Psoas muscle (tissue), 8 donors: ENCODE measurements at regions of chr1 and their contacts with region 1.

Region 1: DNA sequence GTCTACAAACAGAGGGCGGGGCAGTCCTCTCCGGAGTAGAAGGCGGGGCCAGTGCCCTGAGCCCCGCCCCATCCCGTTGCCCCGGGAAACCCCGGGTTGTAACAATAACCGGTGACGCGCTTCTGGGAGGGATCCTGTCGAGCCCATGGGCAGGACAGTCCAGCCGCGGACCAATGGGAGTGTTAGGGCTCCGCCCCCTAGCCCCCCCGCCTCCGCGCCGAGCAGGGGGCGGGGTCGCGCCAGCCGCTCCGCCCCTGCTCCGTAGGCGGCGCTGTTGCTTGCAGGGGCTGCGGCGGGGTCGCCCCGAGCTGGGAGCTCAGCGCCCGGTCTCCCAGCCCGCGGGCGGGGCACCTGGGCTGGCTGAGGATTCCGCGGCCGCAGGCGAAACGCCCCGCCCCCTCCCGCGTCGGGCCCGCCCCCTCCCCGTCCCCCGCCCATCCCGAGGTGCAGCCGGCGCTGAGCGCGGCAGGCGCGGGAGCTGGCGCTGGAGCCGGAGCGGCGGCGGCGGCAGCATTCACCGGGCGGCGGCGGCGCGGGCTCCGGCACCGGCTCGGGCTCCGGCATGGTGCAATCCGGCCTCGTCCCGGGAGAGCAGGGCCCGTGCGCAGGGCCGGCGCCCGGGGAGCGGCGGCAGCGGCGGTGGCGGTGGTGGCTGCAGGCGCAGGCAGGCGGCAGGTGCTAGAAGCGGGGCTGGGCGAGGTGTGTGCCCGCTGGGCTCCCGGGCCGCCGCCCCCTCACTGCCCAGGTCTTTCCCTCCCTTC is at the start of gene FOXO6:
- DNase-seq: peak; percentile 99
- ATAC-seq: peak; percentile 85 to 92 (median 89)
- H3K4me3 ChIP-seq: peak within 1 kb of the TSS; percentile 87
- H3K27ac ChIP-seq: peak within 1 kb of the TSS; percentile 58
- H3K4me1 ChIP-seq: peaks cover 49% of the 10 kb centered on the region
- H3K27me3 ChIP-seq: no peaks in the 10 kb centered on the region
- CTCF ChIP-seq: peak; percentile 66
- total RNA-seq, gene FOXO6: 0.84 to 8.6 (median 3.3) TPM

Region 2: DNA sequence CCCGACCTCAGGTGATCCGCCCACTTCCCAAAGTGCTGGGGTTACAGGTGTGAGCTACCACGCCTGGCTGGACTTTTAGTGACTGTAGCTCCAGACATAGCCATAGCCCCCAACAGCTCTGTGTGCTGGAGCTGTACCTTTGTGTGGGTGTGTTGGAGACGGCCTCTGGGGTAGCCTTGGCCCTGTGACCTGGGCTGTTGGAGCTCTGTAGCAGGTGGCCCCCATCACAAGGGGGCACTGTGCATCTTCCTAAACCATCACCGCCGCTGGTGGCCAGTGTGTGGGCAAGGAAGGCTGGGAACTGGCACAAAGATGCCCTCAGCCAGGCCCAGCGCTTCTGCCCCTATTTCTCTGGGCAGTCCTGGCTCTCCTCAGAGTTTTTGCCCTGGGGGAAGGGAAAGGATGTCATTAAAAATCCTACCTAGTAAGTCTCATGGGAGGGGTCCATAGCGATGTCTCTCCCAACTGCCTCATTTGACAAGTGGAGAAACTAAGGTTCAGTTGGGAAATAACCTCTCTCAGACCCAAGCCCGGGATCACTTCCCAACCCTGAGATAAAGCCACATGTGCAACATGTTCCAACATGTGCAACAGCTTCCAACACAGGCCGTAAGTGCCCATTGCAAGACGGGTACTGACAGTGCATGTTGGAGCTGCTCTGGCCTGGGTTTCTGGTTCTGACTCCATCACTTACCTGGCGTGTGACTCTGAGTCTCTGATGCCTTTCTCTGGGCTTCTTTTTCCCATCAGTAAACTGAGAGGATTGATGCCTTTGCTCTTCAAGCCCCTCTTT is 38.1 kb before region 1 on chr1:
- intact Hi-C with region 1: no loop called
- DNase-seq: peak; percentile 60 to 83
- ATAC-seq: peak; percentile 86 to 94 (median 90)
- H3K4me3 ChIP-seq: no peak overlapping the region
- H3K27ac ChIP-seq: no peak overlapping the region
- H3K4me1 ChIP-seq: peaks cover 24% of the 10 kb centered on the region
- H3K27me3 ChIP-seq: no peaks in the 10 kb centered on the region
- CTCF ChIP-seq: peak; percentile 63

Region 3: GRCh38 chr1:41394959-41395956 is 34.1 kb after region 1 on chr1:
- intact Hi-C with region 1: loop called in 1 of 2 experiments (anchors 5 kb)
- DNase-seq: no peak
- ATAC-seq: no peak
- H3K4me3 ChIP-seq: no peak overlapping the region
- H3K27ac ChIP-seq: peak overlapping the region; percentile 71
- H3K4me1 ChIP-seq: peaks cover 40% of the 10 kb centered on the region
- H3K27me3 ChIP-seq: peaks cover 0 to 3% (median 0%) of the 10 kb centered on the region in 3 donors
- CTCF ChIP-seq: no peak

Region 4: GRCh38 chr1:41423511-41424221 is 62.5 kb after region 1 on chr1:
- intact Hi-C with region 1: loop called (anchors 2 kb)
- DNase-seq: peak; percentile 75 to 93
- ATAC-seq: peak; percentile 73 to 84 (median 77)
- H3K4me3 ChIP-seq: peak overlapping the region; percentile 73
- H3K27ac ChIP-seq: peak overlapping the region; percentile 83
- H3K4me1 ChIP-seq: peaks cover 27% of the 10 kb centered on the region
- H3K27me3 ChIP-seq: no peaks in the 10 kb centered on the region
- CTCF ChIP-seq: peak; percentile 54